Head of caudate nucleus (tissue), 42 donors: ENCODE measurements at regions of chr20 and their contacts with region 1.

Region 1: GRCh38 chr20:17530716-17531664 is at the start of gene BFSP1:
- DNase-seq: peak; percentile 5 to 78 (median 58)

Region 2: DNA sequence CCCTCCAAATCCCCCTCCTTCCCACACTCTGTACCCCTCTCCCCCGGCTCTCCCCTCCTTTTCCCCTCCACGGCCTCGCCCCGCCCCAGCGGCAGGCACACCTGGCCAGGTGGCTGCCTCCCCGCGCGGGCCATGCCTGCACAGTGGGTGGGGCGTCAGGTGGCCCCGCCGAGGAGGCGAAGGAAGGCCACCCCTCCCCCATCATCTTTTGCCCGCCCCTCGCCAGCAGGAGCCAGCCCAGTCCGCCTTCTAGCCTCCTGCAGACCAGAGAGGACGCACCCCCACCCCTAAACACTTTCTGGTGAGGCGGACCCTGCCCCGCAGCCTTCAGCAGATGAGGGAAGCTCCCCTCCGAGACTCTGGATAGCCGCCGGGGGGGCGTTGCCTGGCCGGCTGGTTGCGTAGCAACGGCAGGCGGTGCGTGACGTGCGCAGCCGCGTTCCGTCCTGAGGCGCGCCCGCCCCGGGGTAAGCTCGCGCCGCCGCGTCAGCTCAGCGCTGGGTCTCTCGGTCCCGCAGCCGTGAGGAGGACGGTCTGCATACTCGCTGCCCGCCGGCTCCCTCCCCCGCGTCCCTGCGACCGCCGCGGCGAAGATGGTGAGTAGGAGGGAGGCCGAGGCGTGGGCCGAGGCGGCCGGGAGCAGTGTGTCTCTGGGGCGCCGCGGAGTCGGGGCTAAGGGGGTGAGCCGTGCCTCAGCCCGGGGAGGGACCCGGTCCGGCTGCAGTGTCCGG is 38.8 kb after region 1 on chr20 and contains the start of gene DSTN:
- intact Hi-C with region 1: loop called (anchors 5 kb)
- DNase-seq: peak; percentile 72 to 97 (median 93)